Heart right ventricle (tissue), 16 donors: ENCODE measurements at regions of chr6 and their contacts with region 1.

Region 1: GRCh38 chr6:11645016-11645415 is 107.5 kb downstream of the TMEM170B start:
- DNase-seq: no peak
- ATAC-seq: no peak
- H3K4me3 ChIP-seq: no peak overlapping the region
- H3K27ac ChIP-seq: no peak overlapping the region
- H3K4me1 ChIP-seq: peaks cover 0 to 6% (median 0%) of the 10 kb centered on the region in 9 donors
- H3K27me3 ChIP-seq: no peaks in the 10 kb centered on the region
- CTCF ChIP-seq: no peak

Region 2: GRCh38 chr6:11207199-11207968 is 437.6 kb before region 1 on chr6:
- intact Hi-C with region 1: no loop called
- DNase-seq: peak in 1 of 2 donors; percentile 60
- ATAC-seq: peak; percentile 31 to 81 (median 76)
- H3K4me3 ChIP-seq: no peak overlapping the region
- H3K27ac ChIP-seq: peak overlapping the region in 6 of 10 donors; percentile 26 to 89 (median 61)
- H3K4me1 ChIP-seq: peaks cover 19 to 100% (median 83%) of the 10 kb centered on the region in 9 donors
- H3K27me3 ChIP-seq: no peaks in the 10 kb centered on the region
- CTCF ChIP-seq: no peak

Region 3: DNA sequence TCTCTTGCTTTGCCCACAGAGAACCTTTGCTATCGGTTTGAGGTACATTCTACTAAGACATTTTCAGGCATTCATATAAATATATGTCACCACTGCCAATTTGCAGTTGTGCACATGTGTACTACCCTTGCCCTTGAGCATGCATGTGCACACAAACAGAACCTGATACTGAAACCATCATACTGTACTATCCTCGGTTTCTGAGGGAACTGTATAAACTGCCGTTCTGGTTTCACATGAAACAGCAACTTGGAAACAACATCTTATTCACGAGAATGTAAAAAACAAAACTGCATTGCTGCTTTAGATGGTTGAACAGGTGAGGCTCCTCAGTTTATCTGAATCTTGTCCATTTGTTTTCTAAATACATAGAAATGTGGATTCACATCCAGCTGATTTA is 258.7 kb before region 1 on chr6:
- intact Hi-C with region 1: no loop called
- DNase-seq: no peak
- ATAC-seq: no peak
- H3K4me3 ChIP-seq: no peak overlapping the region
- H3K27ac ChIP-seq: no peak overlapping the region
- H3K4me1 ChIP-seq: peaks cover 0 to 24% (median 18%) of the 10 kb centered on the region in 9 donors
- H3K27me3 ChIP-seq: peaks cover 0 to 4% (median 0%) of the 10 kb centered on the region in 7 donors
- CTCF ChIP-seq: no peak

Region 4: GRCh38 chr6:11609315-11610071 is 35.5 kb before region 1 on chr6:
- intact Hi-C with region 1: loop called in 4 of 10 experiments (anchors 2 to 5 kb)
- DNase-seq: peak; percentile 45 to 64
- ATAC-seq: peak; percentile 74 to 90 (median 78)
- H3K4me3 ChIP-seq: no peak overlapping the region
- H3K27ac ChIP-seq: peak overlapping the region in 9 of 10 donors; percentile 28 to 79 (median 67)
- H3K4me1 ChIP-seq: peaks cover 7 to 59% (median 44%) of the 10 kb centered on the region in 9 donors
- H3K27me3 ChIP-seq: no peaks in the 10 kb centered on the region
- CTCF ChIP-seq: no peak